ENCODE measurements at regions of chr1 and their contacts with region 1.

Region 1: DNA sequence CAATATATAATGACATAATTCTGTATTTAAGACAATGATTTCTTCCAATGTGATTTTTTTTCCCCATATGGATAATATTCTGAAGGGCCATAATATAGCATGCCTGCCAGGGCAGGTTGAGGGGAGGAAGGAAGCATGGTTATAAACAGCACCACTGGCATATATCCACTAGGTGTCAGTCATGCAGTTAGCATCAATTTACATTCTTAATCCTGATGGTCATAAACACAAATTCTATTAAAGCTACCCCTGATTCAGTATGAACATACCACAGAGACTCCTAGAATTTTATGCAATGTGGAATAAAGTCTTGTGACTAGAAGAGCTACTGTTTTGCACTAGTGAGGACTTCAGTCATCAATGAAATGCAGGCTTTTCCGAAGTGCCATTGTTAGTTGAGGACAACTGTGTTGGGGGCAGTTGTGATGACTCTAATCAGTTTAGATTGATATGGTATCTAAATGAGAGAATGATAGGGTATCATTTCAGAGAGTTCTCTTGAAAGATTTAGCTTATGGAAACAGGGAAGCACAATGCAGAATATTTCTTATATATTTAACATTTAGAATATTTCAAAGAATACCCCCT is 342.7 kb upstream of the NR5A2 start:
- DNase-seq: peak in 1 of 2 donors; percentile 23
- ATAC-seq: peak in 6 of 8 donors; percentile 59 to 74 (median 64)
- H3K4me3 ChIP-seq: no peak overlapping the region
- H3K27ac ChIP-seq: no peak overlapping the region
- H3K4me1 ChIP-seq: no peaks in the 10 kb centered on the region
- H3K27me3 ChIP-seq: peaks cover 0 to 9% (median 0%) of the 10 kb centered on the region in 7 donors
- CTCF ChIP-seq: peak; percentile 54 to 90 (median 79)

Region 2: DNA sequence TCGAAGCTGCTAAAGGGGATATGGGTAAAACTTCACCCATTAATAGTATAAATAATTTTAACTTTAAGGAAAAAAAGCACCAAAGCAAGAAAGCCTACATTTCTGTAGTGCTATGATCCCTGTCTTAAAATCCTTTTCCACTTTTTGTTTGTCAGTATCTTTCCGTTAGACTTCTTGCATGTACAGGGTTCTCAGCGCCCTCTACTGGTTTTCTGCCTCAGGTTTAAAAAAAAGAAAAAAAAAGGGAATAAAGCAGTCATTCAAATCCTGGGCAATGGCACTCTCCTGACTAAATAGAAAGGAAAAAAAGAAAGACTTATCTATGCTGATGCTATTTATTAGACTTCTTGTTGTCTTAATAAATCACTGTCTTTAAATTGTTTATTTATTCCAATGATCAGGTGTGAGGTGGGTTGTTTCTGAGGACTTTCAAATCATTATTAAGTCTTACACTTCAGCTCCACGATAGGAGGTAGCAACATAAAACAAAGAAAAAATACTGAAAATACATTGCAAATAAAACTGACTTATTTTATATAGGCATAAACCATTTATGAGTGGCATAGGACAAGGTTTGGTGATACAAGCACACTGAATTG is 132.7 kb before region 1 on chr1:
- intact Hi-C with region 1: no loop called
- DNase-seq: peak in 1 of 2 donors; percentile 37
- ATAC-seq: no peak
- H3K4me3 ChIP-seq: no peak overlapping the region
- H3K27ac ChIP-seq: no peak overlapping the region
- H3K4me1 ChIP-seq: no peaks in the 10 kb centered on the region
- H3K27me3 ChIP-seq: peaks cover 0 to 3% (median 0%) of the 10 kb centered on the region in 7 donors
- CTCF ChIP-seq: peak in 8 of 9 donors; percentile 25 to 80 (median 70)

Region 3: GRCh38 chr1:200038981-200039848 is 354.4 kb after region 1 on chr1:
- intact Hi-C with region 1: loop called in 1 of 10 experiments (anchors 10 kb)
- DNase-seq: peak in 1 of 2 donors; percentile 35
- ATAC-seq: peak; percentile 24 to 63 (median 50)
- H3K4me3 ChIP-seq: peak overlapping the region; percentile 29 to 64 (median 56)
- H3K27ac ChIP-seq: peak overlapping the region in 9 of 10 donors; percentile 13 to 80 (median 52)
- H3K4me1 ChIP-seq: peaks cover 0 to 75% (median 61%) of the 10 kb centered on the region in 9 donors
- H3K27me3 ChIP-seq: peaks cover 31 to 100% (median 100%) of the 10 kb centered on the region in 7 donors
- CTCF ChIP-seq: no peak

Region 4: DNA sequence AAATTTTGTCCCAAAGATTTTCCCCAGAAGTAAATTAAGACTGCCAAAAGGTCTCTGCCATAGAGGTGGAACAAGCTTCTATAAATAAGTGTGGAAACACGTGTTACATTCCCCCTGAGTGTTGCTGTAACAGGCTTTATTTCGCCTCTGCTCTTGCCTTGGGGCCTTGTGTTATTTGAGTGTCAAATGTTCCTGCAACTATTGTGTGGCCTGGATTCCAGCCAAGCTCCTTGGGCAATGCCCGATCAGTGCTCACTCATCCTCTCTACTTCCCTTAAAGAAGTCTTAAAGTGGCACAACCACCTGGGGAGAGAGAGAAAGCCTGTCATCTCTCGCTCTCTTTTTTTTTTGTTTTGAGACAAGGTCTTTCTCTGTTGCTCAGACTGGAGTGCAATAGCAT is 499.4 kb after region 1 on chr1:
- intact Hi-C with region 1: loop called in 1 of 10 experiments (anchors 5 kb)
- DNase-seq: peak; percentile 59 to 79
- ATAC-seq: peak; percentile 89 to 98 (median 94)
- H3K4me3 ChIP-seq: no peak overlapping the region
- H3K27ac ChIP-seq: peak overlapping the region in 8 of 10 donors; percentile 4 to 68 (median 52)
- H3K4me1 ChIP-seq: peaks cover 0 to 26% (median 10%) of the 10 kb centered on the region in 9 donors
- H3K27me3 ChIP-seq: no peaks in the 10 kb centered on the region
- CTCF ChIP-seq: no peak

Region 5: DNA sequence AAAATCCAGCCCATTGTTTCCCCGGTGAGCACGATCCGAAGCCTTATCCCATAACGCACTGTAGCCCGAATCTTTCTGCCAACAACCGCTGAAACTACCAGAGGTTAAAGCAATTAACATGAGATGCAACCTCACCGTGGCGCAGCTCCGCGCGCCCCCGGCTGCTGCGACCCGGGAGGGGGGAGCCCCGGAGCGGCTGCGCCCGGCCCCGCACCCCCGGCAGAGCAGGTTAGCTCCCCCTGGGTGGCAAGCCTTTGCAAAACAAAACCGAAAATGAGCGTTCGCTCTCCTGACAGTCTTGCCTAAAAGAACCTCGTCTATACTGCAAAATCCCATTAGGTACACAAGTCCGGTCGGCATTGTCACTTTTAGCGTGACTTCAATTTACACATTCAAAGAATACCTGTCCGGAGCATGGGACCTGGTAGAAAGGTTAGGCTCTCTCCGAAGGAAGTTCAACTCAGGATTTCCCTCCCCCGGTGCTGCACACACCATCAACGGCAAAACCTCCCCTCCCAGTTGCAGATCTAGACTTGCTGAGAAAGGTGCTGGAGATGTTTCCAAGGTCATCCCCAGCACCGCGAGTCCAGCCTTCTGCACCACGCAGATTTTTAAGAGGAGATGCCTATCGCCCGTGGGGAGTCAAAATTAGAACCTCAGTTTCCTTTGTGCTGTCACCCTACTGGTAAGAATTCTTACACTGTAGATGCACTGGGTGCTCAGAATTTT is 617.6 kb after region 1 on chr1:
- intact Hi-C with region 1: loop called in 7 of 10 experiments (anchors 2 to 10 kb)
- DNase-seq: peak; percentile 11 to 13
- ATAC-seq: peak; percentile 66 to 87 (median 74)
- H3K4me3 ChIP-seq: peak overlapping the region; percentile 40 to 83 (median 73)
- H3K27ac ChIP-seq: peak overlapping the region in 5 of 10 donors; percentile 1 to 64 (median 43)
- H3K4me1 ChIP-seq: peaks cover 0 to 19% (median 6%) of the 10 kb centered on the region in 9 donors
- H3K27me3 ChIP-seq: peaks cover 0 to 17% (median 6%) of the 10 kb centered on the region in 7 donors
- CTCF ChIP-seq: peak in 3 of 9 donors; percentile 23 to 29 (median 28)

Region 6: DNA sequence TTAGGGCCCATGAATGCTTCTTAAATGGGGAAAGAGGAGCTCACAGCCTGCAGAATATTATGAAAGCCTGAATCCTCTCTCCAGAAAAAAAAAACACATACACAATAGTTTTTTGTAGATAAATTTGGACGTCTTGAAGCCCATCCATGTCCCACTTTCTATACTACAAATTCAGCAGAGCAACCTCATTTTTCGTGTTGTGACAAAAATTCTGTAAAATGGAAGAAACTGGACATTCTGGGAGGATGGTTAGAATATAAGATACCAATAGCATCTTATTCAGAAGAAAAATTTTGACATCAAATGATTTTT is 622.9 kb after region 1 on chr1:
- intact Hi-C with region 1: loop called in 8 of 10 experiments (anchors 2 to 10 kb)
- DNase-seq: no peak
- ATAC-seq: no peak
- H3K4me3 ChIP-seq: no peak overlapping the region
- H3K27ac ChIP-seq: no peak overlapping the region
- H3K4me1 ChIP-seq: peaks cover 0 to 14% (median 0%) of the 10 kb centered on the region in 9 donors
- H3K27me3 ChIP-seq: peaks cover 0 to 3% (median 0%) of the 10 kb centered on the region in 7 donors
- CTCF ChIP-seq: peak in 1 of 9 donors; percentile 3

Region 7: GRCh38 chr1:200510228-200510623 is 825.4 kb after region 1 on chr1:
- intact Hi-C with region 1: loop called in 4 of 10 experiments (anchors 2 to 10 kb)
- DNase-seq: peak in 1 of 2 donors; percentile 68
- ATAC-seq: peak in 6 of 8 donors; percentile 70 to 84 (median 80)
- H3K4me3 ChIP-seq: no peak overlapping the region
- H3K27ac ChIP-seq: no peak overlapping the region
- H3K4me1 ChIP-seq: no peaks in the 10 kb centered on the region
- H3K27me3 ChIP-seq: peaks cover 0 to 43% (median 12%) of the 10 kb centered on the region in 7 donors
- CTCF ChIP-seq: peak; percentile 81 to 98 (median 92)

Measured in heart right ventricle (tissue), 16 donors.